ENCODE measurements at regions of chr10 and their contacts with region 1.

Region 1: DNA sequence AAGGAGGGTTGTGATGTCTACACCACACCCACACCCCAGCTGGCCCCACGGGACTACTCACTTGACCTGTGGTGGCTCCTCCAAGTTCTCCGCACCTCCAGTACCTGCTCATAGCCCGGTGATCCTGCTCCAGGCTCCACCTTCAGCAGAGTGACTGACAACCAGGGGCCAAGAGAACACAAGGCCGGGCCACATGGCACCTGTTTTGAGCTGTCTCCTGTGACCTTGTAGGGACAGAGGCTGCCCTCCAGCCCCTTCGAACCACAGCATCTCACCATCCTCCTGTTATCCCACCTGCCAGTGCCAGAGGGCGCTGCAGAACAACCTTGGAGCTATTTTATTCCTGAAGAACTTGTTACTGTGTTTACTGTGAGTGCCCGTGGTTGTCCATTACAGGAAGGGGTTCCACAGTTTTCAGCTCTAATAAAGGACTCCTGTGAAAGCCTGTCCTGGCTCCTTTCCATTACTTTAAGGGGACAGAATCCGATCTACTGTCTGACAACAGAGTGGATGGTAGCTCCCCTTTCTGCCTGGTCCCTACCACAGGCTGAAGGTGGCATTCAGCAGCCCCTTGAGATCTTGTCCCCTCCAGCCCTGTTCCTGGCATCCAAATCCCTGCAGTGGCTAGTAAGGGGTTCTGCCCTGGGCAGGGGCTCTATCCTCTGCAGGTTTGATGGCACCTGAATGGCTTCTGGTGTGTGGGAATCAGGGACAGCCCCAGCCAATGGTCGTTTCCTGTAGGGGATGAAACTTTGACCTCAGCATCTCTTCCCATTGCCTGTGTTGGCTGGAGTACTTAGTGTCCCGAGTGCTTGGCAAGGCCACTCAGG is 50.8 kb downstream of the C10orf120 start:
- DNase-seq: peak; percentile 48 to 81 (median 71)
- ATAC-seq: peak; percentile 59 to 72
- H3K4me3 ChIP-seq: no peak overlapping the region
- H3K27ac ChIP-seq: no peak overlapping the region
- H3K4me1 ChIP-seq: no peaks in the 10 kb centered on the region
- H3K27me3 ChIP-seq: no peaks in the 10 kb centered on the region

Region 2: DNA sequence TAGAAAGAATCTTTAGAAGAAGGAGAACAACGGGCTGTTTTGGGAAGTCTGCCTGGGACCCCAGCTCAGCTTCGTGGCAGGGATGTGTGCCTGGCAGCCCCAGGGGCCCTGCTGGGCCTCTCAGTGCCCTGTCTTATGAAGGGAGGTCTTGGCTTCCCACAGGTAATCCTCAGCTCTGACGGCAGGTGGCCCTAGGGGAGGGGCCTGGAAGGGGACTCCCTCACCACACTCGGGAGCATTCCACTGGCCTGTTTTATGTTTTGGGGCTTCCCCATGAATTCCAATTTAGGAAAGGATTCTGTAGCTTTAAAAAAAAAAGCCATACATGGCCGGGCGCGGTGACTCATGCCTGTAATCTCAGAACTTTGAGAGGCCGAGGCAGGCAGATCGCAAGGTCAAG is 91.3 kb before region 1 on chr10:
- intact Hi-C with region 1: no loop called
- DNase-seq: no peak
- ATAC-seq: no peak
- H3K4me3 ChIP-seq: no peak overlapping the region
- H3K27ac ChIP-seq: no peak overlapping the region
- H3K4me1 ChIP-seq: no peaks in the 10 kb centered on the region
- H3K27me3 ChIP-seq: no peaks in the 10 kb centered on the region

Region 3: GRCh38 chr10:122688293-122688994 is 39.6 kb after region 1 on chr10:
- intact Hi-C with region 1: loop called in 1 of 4 experiments (anchors 2 kb)
- DNase-seq: peak in 2 of 3 donors; percentile 61 to 64
- ATAC-seq: peak; percentile 82 to 89
- H3K4me3 ChIP-seq: no peak overlapping the region
- H3K27ac ChIP-seq: peak overlapping the region; percentile 61
- H3K4me1 ChIP-seq: no peaks in the 10 kb centered on the region
- H3K27me3 ChIP-seq: no peaks in the 10 kb centered on the region

Region 4: GRCh38 chr10:122847782-122848604 is 199.2 kb after region 1 on chr10:
- intact Hi-C with region 1: no loop called
- DNase-seq: no peak
- ATAC-seq: no peak
- H3K4me3 ChIP-seq: no peak overlapping the region
- H3K27ac ChIP-seq: no peak overlapping the region
- H3K4me1 ChIP-seq: no peaks in the 10 kb centered on the region
- H3K27me3 ChIP-seq: no peaks in the 10 kb centered on the region

Region 5: DNA sequence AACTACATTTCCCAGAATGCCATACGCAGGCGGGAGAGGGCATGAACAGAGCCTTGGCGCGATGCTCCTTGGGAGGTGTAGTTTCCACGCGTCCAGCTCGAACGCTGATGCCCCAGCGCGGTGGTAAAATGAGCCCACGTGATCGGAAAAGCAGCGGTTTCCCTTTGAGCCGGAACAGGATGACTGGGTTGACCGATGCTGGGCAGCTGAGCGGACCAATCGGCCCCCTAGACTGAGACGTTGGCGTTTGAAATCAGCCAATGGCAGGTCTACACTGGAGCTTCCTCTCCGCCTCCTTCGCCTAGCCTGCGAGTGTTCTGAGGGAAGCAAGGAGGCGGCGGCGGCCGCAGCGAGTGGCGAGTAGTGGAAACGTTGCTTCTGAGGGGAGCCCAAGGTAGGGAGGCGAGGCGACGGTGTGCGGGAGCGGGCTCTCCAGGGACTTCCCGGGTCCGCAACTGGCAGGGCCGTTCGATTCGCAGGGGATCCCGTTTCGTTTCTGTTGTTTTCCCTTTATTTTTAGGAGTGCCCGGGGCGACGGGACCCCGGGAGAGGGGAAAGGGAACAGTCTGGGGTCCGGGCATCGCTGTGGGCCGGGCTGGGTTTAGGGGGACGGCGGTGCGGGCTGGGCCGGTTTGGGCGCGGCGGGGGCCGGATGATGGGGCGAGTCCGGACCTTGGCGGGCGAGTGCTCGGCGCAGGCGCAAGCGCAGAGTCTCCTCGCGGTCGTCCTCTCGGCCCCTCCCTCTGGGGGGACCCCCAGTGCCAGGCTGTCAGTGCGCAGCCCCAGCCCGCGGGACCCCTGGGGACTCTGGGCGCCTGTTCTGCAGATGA is 505.5 kb after region 1 on chr10 and contains the start of gene BUB3:
- intact Hi-C with region 1: no loop called
- DNase-seq: peak; percentile 98 to 99 (median 99)
- ATAC-seq: peak; percentile 99 to 100
- H3K4me3 ChIP-seq: peak within 1 kb of the TSS; percentile 91
- H3K27ac ChIP-seq: peak within 1 kb of the TSS; percentile 92
- H3K4me1 ChIP-seq: peaks cover 7% of the 10 kb centered on the region
- H3K27me3 ChIP-seq: no peaks in the 10 kb centered on the region
- total RNA-seq, gene BUB3: 33.7 to 43.0 (median 37.8) TPM